Prostate gland (tissue), 2 donors: ENCODE measurements at regions of chr1 and their contacts with region 1.

Region 1: GRCh38 chr1:115373305-115373704 is 35.3 kb upstream of the NGF start:
- DNase-seq: no peak
- H3K4me3 ChIP-seq: no peak overlapping the region
- H3K27ac ChIP-seq: no peak overlapping the region
- H3K4me1 ChIP-seq: no peaks in the 10 kb centered on the region
- H3K27me3 ChIP-seq: no peaks in the 10 kb centered on the region
- CTCF ChIP-seq: no peak
- POLR2A ChIP-seq: no peak

Region 2: GRCh38 chr1:114402843-114403242 is 970.5 kb before region 1 on chr1:
- intact Hi-C with region 1: loop called (anchors 10 kb)
- DNase-seq: no peak
- H3K4me3 ChIP-seq: no peak overlapping the region
- H3K27ac ChIP-seq: no peak overlapping the region
- H3K4me1 ChIP-seq: no peaks in the 10 kb centered on the region
- H3K27me3 ChIP-seq: no peaks in the 10 kb centered on the region
- CTCF ChIP-seq: no peak
- POLR2A ChIP-seq: no peak